CD4-positive, alpha-beta memory T cell (primary cell): ENCODE measurements at regions of chr9 and their contacts with region 1.

Region 1: GRCh38 chr9:36102742-36103495 is 33.6 kb upstream of the GLIPR2 start:
- DNase-seq: peak; percentile 79 to 88 (median 82)
- H3K4me3 ChIP-seq: no peak overlapping the region
- H3K4me3 Mint-ChIP-seq: no peak overlapping the region
- H3K27ac ChIP-seq: no peak overlapping the region
- H3K27ac Mint-ChIP-seq: peak overlapping the region in 4 of 7 donors; percentile 34 to 69 (median 50)
- H3K4me1 ChIP-seq: peaks cover 5% of the 10 kb centered on the region
- H3K4me1 Mint-ChIP-seq: peaks cover 5 to 9% (median 7%) of the 10 kb centered on the region in 4 donors
- H3K27me3 ChIP-seq: no peaks in the 10 kb centered on the region
- H3K27me3 Mint-ChIP-seq: no peaks in the 10 kb centered on the region

Region 2: DNA sequence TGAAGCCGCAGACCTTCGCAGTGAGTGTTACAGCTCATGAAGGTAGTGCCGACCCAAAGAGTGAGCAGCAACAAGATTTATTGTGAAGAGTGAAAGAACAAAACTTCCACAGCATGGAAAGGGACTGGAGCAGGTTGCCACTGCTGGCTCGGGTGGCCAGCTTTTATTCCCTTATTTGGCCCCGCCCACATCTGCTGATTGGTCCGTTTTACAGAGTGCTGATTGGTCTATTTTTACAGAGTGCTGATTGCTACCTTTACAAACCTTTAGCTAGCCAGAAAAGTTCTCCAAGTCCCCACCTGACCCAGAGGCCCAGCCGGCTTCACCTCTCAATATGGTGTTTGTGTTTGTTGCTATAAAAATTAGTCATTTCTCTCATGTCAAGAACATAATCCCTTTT is 16.5 kb before region 1 on chr9:
- CTCF ChIA-PET with region 1: interaction called, 25 read pairs
- POLR2A ChIA-PET with region 1: no interaction called
- intact Hi-C with region 1: no loop called
- DNase-seq: no peak
- H3K4me3 ChIP-seq: no peak overlapping the region
- H3K4me3 Mint-ChIP-seq: no peak overlapping the region
- H3K27ac ChIP-seq: no peak overlapping the region
- H3K27ac Mint-ChIP-seq: peak overlapping the region in 1 of 7 donors; percentile 61
- H3K4me1 ChIP-seq: no peaks in the 10 kb centered on the region
- H3K4me1 Mint-ChIP-seq: peaks cover 0 to under 1% (median under 1%) of the 10 kb centered on the region in 4 donors
- H3K27me3 ChIP-seq: no peaks in the 10 kb centered on the region
- H3K27me3 Mint-ChIP-seq: no peaks in the 10 kb centered on the region

Region 3: GRCh38 chr9:36118706-36119105 is 15.8 kb after region 1 on chr9:
- CTCF ChIA-PET with region 1: interaction called, 65 read pairs
- POLR2A ChIA-PET with region 1: interaction called, 3 read pairs
- intact Hi-C with region 1: no loop called
- DNase-seq: no peak
- H3K4me3 ChIP-seq: no peak overlapping the region
- H3K4me3 Mint-ChIP-seq: no peak overlapping the region
- H3K27ac ChIP-seq: no peak overlapping the region
- H3K27ac Mint-ChIP-seq: peak overlapping the region in 1 of 7 donors; percentile 51
- H3K4me1 ChIP-seq: no peaks in the 10 kb centered on the region
- H3K4me1 Mint-ChIP-seq: peaks cover 0 to 2% (median 0%) of the 10 kb centered on the region in 4 donors
- H3K27me3 ChIP-seq: no peaks in the 10 kb centered on the region
- H3K27me3 Mint-ChIP-seq: no peaks in the 10 kb centered on the region

Region 4: DNA sequence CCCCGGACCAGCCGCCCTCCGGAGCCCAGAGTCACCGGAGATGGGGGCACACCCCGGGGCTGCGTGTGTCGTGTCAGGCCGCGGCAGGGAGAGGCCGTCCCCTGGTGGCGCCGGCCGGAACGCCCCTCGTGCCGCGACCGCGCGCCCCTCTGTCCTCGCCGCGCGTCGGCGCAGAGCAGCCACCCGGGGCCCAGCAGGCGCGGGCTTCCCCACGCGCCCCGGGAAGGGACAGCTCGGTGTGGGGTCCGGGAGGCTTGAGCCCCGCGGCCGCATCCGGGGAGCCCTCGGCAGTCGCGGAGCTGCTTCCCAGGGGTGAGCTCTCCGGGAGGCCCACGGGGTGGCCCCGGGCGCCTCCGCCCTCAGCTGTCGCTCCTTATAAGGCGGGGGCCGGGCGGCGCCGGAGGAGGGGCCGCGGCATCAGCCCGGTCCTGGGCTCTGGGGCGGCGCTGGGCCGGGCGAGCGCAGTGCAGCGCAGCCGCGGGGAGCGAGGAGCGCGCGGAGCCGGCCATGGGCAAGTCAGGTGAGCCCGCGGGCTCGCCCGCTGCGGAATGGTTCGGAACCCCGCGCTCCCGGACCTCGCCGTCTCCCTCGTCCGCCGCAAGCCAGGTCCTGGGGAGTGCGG is 33.5 kb after region 1 on chr9 and contains the start of gene GLIPR2:
- CTCF ChIA-PET with region 1: interaction called, 20 read pairs
- POLR2A ChIA-PET with region 1: interaction called, 4 read pairs
- intact Hi-C with region 1: loop called (anchors 1 kb)
- DNase-seq: peak; percentile 75 to 82 (median 79)
- H3K4me3 ChIP-seq: peak within 1 kb of the TSS; percentile 66 to 81
- H3K4me3 Mint-ChIP-seq: peak within 1 kb of the TSS; percentile 92 to 97 (median 95)
- H3K27ac ChIP-seq: peak within 1 kb of the TSS; percentile 77
- H3K27ac Mint-ChIP-seq: peak within 1 kb of the TSS; percentile 89 to 97 (median 95)
- H3K4me1 ChIP-seq: peaks cover 54% of the 10 kb centered on the region
- H3K4me1 Mint-ChIP-seq: peaks cover 35 to 56% (median 48%) of the 10 kb centered on the region in 4 donors
- H3K27me3 ChIP-seq: no peaks in the 10 kb centered on the region
- H3K27me3 Mint-ChIP-seq: no peaks in the 10 kb centered on the region
- total RNA-seq, gene GLIPR2: 17.0 to 18.9 TPM

Region 5: GRCh38 chr9:36148311-36149051 is 45.6 kb after region 1 on chr9:
- CTCF ChIA-PET with region 1: interaction called, 49 read pairs
- POLR2A ChIA-PET with region 1: interaction called, 11 read pairs
- intact Hi-C with region 1: loop called (anchors 1 kb)
- DNase-seq: peak; percentile 56 to 88 (median 61)
- H3K4me3 ChIP-seq: no peak overlapping the region
- H3K4me3 Mint-ChIP-seq: peak overlapping the region in 7 of 8 donors; percentile 17 to 77 (median 42)
- H3K27ac ChIP-seq: peak overlapping the region; percentile 73
- H3K27ac Mint-ChIP-seq: peak overlapping the region; percentile 61 to 95 (median 92)
- H3K4me1 ChIP-seq: peaks cover 100% of the 10 kb centered on the region
- H3K4me1 Mint-ChIP-seq: peaks cover 68 to 99% (median 83%) of the 10 kb centered on the region in 4 donors
- H3K27me3 ChIP-seq: no peaks in the 10 kb centered on the region
- H3K27me3 Mint-ChIP-seq: no peaks in the 10 kb centered on the region

Region 6: DNA sequence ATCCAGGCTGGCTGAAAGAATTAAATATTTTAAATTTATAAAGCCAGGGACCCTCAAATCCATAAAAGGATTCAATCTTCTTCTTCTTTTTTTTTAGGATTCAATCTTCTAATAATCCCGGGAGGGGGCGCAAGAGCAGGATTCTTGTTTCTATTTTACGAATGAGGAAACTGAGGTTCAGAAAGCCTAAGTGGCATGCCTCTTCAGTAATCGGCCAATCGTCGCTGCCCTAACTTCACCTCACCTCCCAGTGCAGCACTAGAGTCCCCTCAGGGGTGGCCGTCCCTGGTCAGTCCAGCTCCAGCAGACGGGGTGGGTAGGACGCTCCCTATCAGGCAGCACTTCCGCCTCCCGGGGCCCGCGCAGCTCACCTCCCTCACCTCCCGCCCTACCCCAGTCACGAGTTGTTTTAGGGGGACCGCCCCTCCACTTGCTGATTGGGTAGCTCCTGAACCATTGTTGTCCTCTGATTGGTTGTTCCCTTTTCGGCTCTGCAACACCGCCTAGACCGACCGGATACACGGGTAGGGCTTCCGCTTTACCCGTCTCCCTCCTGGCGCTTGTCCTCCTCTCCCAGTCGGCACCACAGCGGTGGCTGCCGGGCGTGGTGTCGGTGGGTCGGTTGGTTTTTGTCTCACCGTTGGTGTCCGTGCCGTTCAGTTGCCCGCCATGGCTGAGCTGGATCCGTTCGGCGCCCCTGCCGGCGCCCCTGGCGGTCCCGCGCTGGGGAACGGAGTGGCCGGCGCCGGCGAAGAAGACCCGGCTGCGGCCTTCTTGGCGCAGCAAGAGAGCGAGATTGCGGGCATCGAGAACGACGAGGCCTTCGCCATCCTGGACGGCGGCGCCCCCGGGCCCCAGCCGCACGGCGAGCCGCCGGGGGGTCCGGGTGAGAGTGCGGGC is 87.7 kb after region 1 on chr9 and contains the start of gene CLTA:
- CTCF ChIA-PET with region 1: interaction called, 40 read pairs
- POLR2A ChIA-PET with region 1: interaction called, 8 read pairs
- intact Hi-C with region 1: loop called (anchors 1 kb)
- DNase-seq: peak; percentile 93 to 98 (median 95)
- H3K4me3 ChIP-seq: peak within 1 kb of the TSS; percentile 87 to 94
- H3K4me3 Mint-ChIP-seq: peak within 1 kb of the TSS; percentile 90 to 98 (median 94)
- H3K27ac ChIP-seq: peak within 1 kb of the TSS; percentile 91
- H3K27ac Mint-ChIP-seq: peak within 1 kb of the TSS; percentile 92 to 96 (median 96)
- H3K4me1 ChIP-seq: peaks cover 42% of the 10 kb centered on the region
- H3K4me1 Mint-ChIP-seq: peaks cover 36 to 57% (median 44%) of the 10 kb centered on the region in 4 donors
- H3K27me3 ChIP-seq: no peaks in the 10 kb centered on the region
- H3K27me3 Mint-ChIP-seq: peaks cover 0 to 1% of the 10 kb centered on the region in 2 donors
- total RNA-seq, gene CLTA: 69.9 to 72.3 TPM

Region 7: DNA sequence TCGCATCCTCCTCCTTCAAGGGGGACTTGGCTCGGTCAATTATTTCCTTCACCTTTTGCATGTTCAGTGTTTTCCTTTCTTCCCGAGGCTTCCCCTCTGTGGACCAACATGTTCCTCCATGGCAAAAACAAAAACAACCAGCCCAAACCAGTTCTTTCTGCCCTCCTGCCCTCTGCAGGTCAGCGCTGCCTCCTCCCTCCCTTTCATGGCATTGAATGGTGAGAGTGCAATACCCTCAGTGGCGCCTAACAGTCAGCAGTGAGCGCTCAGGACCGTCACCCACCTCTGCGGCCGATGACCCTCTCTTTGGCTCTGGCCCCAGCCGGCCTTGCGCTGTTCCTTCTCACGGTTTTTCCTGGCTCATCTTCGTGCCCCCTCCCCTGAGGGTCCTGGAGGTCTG is 189.7 kb after region 1 on chr9:
- CTCF ChIA-PET with region 1: no interaction called
- POLR2A ChIA-PET with region 1: no interaction called
- intact Hi-C with region 1: no loop called
- DNase-seq: no peak
- H3K4me3 ChIP-seq: no peak overlapping the region
- H3K4me3 Mint-ChIP-seq: no peak overlapping the region
- H3K27ac ChIP-seq: no peak overlapping the region
- H3K27ac Mint-ChIP-seq: no peak overlapping the region
- H3K4me1 ChIP-seq: no peaks in the 10 kb centered on the region
- H3K4me1 Mint-ChIP-seq: no peaks in the 10 kb centered on the region
- H3K27me3 ChIP-seq: no peaks in the 10 kb centered on the region
- H3K27me3 Mint-ChIP-seq: no peaks in the 10 kb centered on the region

Region 8: DNA sequence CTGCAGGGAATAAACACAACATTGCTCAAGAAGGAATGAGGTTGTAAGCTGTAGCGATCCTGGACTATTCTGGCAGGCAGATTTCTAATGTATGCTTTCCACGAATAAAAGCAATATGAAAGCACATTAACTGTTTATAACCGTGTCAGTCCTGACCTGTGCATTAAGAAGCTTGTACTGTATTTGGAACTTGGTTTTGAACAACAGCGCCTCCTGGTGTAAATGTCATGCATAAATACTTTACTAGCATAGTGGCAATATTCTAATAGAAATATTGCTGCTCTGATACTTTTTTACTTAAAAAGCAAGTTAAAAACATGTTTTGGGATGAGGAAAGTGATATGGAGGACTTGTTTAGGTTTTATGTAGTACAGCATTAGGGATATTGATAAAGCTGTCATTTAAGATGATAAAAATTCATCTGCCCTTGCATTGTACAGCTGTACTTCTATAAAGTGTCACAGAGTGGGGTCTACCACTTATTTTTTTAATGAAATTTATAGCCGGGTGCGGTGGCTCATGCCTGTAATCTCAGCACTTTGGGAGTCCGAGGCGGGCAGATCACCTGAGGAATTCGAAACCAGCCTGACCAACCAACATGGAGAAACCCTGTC is 226.0 kb after region 1 on chr9:
- CTCF ChIA-PET with region 1: interaction called, 8 read pairs
- POLR2A ChIA-PET with region 1: no interaction called
- intact Hi-C with region 1: loop called (anchors 1 kb)
- DNase-seq: peak; percentile 46 to 64 (median 60)
- H3K4me3 ChIP-seq: no peak overlapping the region
- H3K4me3 Mint-ChIP-seq: peak overlapping the region in 2 of 8 donors; percentile 29 to 48
- H3K27ac ChIP-seq: no peak overlapping the region
- H3K27ac Mint-ChIP-seq: no peak overlapping the region
- H3K4me1 ChIP-seq: no peaks in the 10 kb centered on the region
- H3K4me1 Mint-ChIP-seq: peaks cover 0 to 4% (median 3%) of the 10 kb centered on the region in 4 donors
- H3K27me3 ChIP-seq: no peaks in the 10 kb centered on the region
- H3K27me3 Mint-ChIP-seq: no peaks in the 10 kb centered on the region